CD4-positive, alpha-beta T cell (primary cell): ENCODE measurements at regions of chr6 and their contacts with region 1.

Region 1: GRCh38 chr6:30616811-30617564 is at the start of gene PPP1R10:
- DNase-seq: peak; percentile 93 to 100 (median 98)
- ATAC-seq: peak; percentile 70
- H3K4me3 ChIP-seq: peak within 1 kb of the TSS; percentile 76
- H3K4me3 Mint-ChIP-seq: peak within 1 kb of the TSS; percentile 100
- H3K27ac ChIP-seq: peak within 1 kb of the TSS; percentile 94 to 98
- H3K27ac Mint-ChIP-seq: peak within 1 kb of the TSS; percentile 99
- H3K4me1 ChIP-seq: peaks cover 34% of the 10 kb centered on the region
- H3K4me1 Mint-ChIP-seq: peaks cover 32% of the 10 kb centered on the region
- H3K27me3 ChIP-seq: no peaks in the 10 kb centered on the region
- H3K27me3 Mint-ChIP-seq: peaks cover 5% of the 10 kb centered on the region
- CTCF ChIP-seq: no peak
- total RNA-seq, gene PPP1R10: 92.2 to 95.3 TPM

Region 2: GRCh38 chr6:30357678-30358540 is 259.1 kb before region 1 on chr6:
- CTCF ChIA-PET with region 1: no interaction called
- POLR2A ChIA-PET with region 1: no interaction called
- intact Hi-C with region 1: no loop called
- DNase-seq: peak; percentile 19 to 82 (median 44)
- ATAC-seq: peak; percentile 94
- H3K4me3 ChIP-seq: peak overlapping the region; percentile 49
- H3K4me3 Mint-ChIP-seq: peak overlapping the region; percentile 63
- H3K27ac ChIP-seq: no peak overlapping the region
- H3K27ac Mint-ChIP-seq: no peak overlapping the region
- H3K4me1 ChIP-seq: peaks cover 7% of the 10 kb centered on the region
- H3K4me1 Mint-ChIP-seq: peaks cover 5% of the 10 kb centered on the region
- H3K27me3 ChIP-seq: peaks cover 25 to 58% of the 10 kb centered on the region in 2 experiments
- H3K27me3 Mint-ChIP-seq: peaks cover 66% of the 10 kb centered on the region
- CTCF ChIP-seq: peak; percentile 80

Region 3: DNA sequence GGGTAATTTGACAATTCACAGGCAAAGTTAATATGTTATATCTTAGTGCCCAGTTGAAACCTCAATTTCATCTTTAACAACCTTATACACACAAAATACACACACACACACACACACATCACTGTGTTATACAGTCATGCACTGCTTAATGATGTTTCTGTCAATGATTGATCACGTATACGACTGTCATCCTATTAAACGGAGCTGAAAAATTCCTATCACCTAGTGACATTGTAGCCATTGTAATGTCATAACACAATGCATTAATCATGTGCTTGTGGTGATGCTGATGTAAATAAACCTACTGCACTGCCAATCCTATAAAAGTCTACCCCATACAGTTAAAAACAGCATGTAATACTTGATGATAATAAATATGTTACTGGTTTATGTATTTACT is 192.4 kb before region 1 on chr6:
- CTCF ChIA-PET with region 1: no interaction called
- POLR2A ChIA-PET with region 1: no interaction called
- intact Hi-C with region 1: no loop called
- DNase-seq: no peak
- ATAC-seq: no peak
- H3K4me3 ChIP-seq: no peak overlapping the region
- H3K4me3 Mint-ChIP-seq: no peak overlapping the region
- H3K27ac ChIP-seq: no peak overlapping the region
- H3K27ac Mint-ChIP-seq: no peak overlapping the region
- H3K4me1 ChIP-seq: no peaks in the 10 kb centered on the region
- H3K4me1 Mint-ChIP-seq: no peaks in the 10 kb centered on the region
- H3K27me3 ChIP-seq: peaks cover 8 to 25% of the 10 kb centered on the region in 2 experiments
- H3K27me3 Mint-ChIP-seq: peaks cover 77% of the 10 kb centered on the region
- CTCF ChIP-seq: no peak

Region 4: GRCh38 chr6:30453508-30454116 is 163.4 kb before region 1 on chr6:
- CTCF ChIA-PET with region 1: interaction called, 14 read pairs
- POLR2A ChIA-PET with region 1: interaction called, 4 read pairs
- intact Hi-C with region 1: no loop called
- DNase-seq: peak; percentile 77 to 95 (median 86)
- ATAC-seq: peak; percentile 76
- H3K4me3 ChIP-seq: peak overlapping the region; percentile 22
- H3K4me3 Mint-ChIP-seq: peak overlapping the region; percentile 67
- H3K27ac ChIP-seq: no peak overlapping the region
- H3K27ac Mint-ChIP-seq: no peak overlapping the region
- H3K4me1 ChIP-seq: peaks cover 44% of the 10 kb centered on the region
- H3K4me1 Mint-ChIP-seq: peaks cover 49% of the 10 kb centered on the region
- H3K27me3 ChIP-seq: peaks cover 64 to 78% of the 10 kb centered on the region in 2 experiments
- H3K27me3 Mint-ChIP-seq: peaks cover 91% of the 10 kb centered on the region
- CTCF ChIP-seq: peak; percentile 56

Region 5: DNA sequence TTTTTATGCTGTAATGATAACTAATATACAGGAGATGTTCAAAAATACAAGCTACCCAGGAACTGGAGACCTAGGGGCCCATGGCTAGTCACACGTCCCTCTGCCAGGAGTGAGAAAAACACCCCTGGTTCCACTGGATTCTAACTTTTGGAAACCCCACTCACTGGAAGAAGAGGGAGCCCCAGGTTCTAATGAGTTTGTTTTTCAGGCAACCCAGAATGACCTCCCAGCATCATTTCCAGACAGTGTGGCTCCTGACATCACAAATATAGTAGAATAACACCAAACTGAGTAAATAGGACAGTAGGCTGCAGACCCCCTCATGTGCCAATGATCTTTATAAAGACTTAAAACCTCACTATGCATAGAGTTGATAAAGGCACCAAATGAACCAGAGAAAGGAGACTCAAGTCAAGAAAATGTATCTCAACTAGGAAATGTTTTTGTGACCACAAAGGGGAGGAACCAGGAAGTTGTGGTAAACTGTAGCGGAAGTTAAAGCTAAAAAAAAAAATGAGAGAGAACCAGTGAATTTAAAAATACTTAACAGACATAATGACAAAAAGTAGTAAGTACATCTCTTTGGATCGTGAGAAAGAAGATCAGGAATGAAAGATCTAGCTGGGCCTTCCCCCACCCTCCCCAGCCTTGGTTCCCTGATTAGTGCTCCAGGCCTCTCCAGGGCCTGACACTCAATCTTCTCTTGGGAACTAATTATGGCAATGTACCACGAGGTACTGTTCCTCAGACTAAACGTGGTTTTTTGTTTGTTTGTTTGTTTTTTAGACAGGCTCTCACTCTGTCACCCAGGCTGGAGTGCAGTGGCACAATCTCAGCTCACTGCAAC is 107.9 kb before region 1 on chr6:
- CTCF ChIA-PET with region 1: no interaction called
- POLR2A ChIA-PET with region 1: interaction called, 18 read pairs
- intact Hi-C with region 1: no loop called
- DNase-seq: peak in 3 of 14 experiments; percentile 84 to 88 (median 86)
- ATAC-seq: peak; percentile 85
- H3K4me3 ChIP-seq: peak overlapping the region; percentile 36
- H3K4me3 Mint-ChIP-seq: peak overlapping the region; percentile 72
- H3K27ac ChIP-seq: peak overlapping the region; percentile 47 to 65
- H3K27ac Mint-ChIP-seq: peak overlapping the region; percentile 79
- H3K4me1 ChIP-seq: peaks cover 75% of the 10 kb centered on the region
- H3K4me1 Mint-ChIP-seq: peaks cover 62% of the 10 kb centered on the region
- H3K27me3 ChIP-seq: no peaks in the 10 kb centered on the region
- H3K27me3 Mint-ChIP-seq: no peaks in the 10 kb centered on the region
- CTCF ChIP-seq: no peak

Region 6: GRCh38 chr6:30556066-30556905 is 60.7 kb before region 1 on chr6 and contains the start of gene GNL1:
- CTCF ChIA-PET with region 1: no interaction called
- POLR2A ChIA-PET with region 1: interaction called, 83 read pairs
- intact Hi-C with region 1: loop called (anchors 1 kb)
- DNase-seq: peak; percentile 98 to 100 (median 99)
- ATAC-seq: peak; percentile 88
- H3K4me3 ChIP-seq: peak within 1 kb of the TSS; percentile 86
- H3K4me3 Mint-ChIP-seq: peak within 1 kb of the TSS; percentile 98
- H3K27ac ChIP-seq: peak within 1 kb of the TSS; percentile 94 to 97
- H3K27ac Mint-ChIP-seq: peak within 1 kb of the TSS; percentile 97
- H3K4me1 ChIP-seq: peaks cover 27% of the 10 kb centered on the region
- H3K4me1 Mint-ChIP-seq: peaks cover 50% of the 10 kb centered on the region
- H3K27me3 ChIP-seq: no peaks in the 10 kb centered on the region
- H3K27me3 Mint-ChIP-seq: no peaks in the 10 kb centered on the region
- CTCF ChIP-seq: no peak
- total RNA-seq, gene GNL1: 145 to 151 TPM

Region 7: DNA sequence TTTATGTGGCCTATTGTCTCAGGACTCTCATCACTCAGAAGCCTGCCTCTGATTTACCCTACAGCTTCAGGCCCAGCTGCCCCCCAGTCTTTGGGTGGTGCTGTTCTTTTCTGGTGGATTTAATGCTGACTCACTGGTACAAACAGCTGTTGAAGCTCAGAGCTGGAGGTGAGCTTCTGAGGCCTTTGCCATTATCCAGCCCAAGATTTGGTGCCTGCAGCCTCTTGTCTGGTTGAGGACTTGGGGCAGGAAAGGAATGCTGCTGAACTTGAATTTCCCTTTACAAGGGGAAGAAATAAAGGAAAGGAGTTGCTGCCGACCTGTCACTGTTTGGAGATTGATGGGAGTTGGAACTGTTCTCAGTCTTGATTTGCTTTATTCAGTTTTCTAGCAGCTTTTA is 26.0 kb before region 1 on chr6:
- CTCF ChIA-PET with region 1: interaction called, 22 read pairs
- POLR2A ChIA-PET with region 1: interaction called, 135 read pairs
- intact Hi-C with region 1: no loop called
- DNase-seq: no peak
- ATAC-seq: no peak
- H3K4me3 ChIP-seq: no peak overlapping the region
- H3K4me3 Mint-ChIP-seq: no peak overlapping the region
- H3K27ac ChIP-seq: no peak overlapping the region
- H3K27ac Mint-ChIP-seq: no peak overlapping the region
- H3K4me1 ChIP-seq: no peaks in the 10 kb centered on the region
- H3K4me1 Mint-ChIP-seq: peaks cover 12% of the 10 kb centered on the region
- H3K27me3 ChIP-seq: no peaks in the 10 kb centered on the region
- H3K27me3 Mint-ChIP-seq: no peaks in the 10 kb centered on the region
- CTCF ChIP-seq: no peak

Region 8: DNA sequence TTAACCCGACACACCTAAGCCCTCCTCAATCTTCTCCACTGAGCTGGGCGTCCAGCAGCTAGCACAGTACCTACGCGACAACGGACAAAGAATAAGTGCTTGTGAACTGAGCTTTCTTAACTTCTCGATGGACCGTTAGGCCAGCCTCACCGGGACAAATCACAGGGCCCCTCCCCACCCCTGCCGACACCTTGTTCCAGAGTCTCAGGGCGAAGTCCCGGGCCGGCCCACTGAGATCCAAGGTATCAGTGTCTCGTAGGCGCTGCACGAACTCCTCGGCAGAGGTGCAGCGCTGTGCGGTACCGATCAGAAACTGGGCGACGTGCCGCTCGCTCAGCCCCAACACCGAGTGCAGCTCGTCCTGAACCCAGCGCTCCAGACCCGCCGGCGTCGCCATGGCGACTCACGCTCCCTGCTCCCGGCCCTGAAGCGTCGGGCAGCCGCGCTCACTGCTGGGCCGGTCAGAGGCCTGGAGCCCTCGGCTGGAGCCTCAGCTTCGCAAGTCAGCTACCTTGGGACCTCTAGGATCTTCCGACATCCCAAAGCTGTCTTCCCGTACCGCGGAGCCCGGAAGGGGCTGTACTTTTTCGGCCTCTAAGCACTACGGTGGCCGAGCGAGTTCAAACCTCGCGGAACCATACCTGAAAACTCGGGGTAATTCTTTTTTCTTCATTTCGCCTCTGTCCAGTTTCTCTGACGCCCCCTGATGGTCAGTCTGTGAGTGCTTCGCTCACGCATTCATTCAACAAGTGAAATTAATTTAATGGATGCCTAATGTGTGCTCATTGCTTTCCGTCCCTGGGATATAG is 55.7 kb after region 1 on chr6 and contains the start of gene DHX16:
- CTCF ChIA-PET with region 1: interaction called, 4 read pairs
- POLR2A ChIA-PET with region 1: interaction called, 17 read pairs
- intact Hi-C with region 1: loop called in 1 of 2 experiments (anchors 5 kb)
- DNase-seq: peak; percentile 79 to 95 (median 84)
- ATAC-seq: peak; percentile 76
- H3K4me3 ChIP-seq: peak within 1 kb of the TSS; percentile 98
- H3K4me3 Mint-ChIP-seq: peak within 1 kb of the TSS; percentile 87
- H3K27ac ChIP-seq: peak within 1 kb of the TSS; percentile 49 to 59
- H3K27ac Mint-ChIP-seq: peak within 1 kb of the TSS; percentile 86
- H3K4me1 ChIP-seq: peaks cover 18% of the 10 kb centered on the region
- H3K4me1 Mint-ChIP-seq: peaks cover 49% of the 10 kb centered on the region
- H3K27me3 ChIP-seq: no peaks in the 10 kb centered on the region
- H3K27me3 Mint-ChIP-seq: no peaks in the 10 kb centered on the region
- CTCF ChIP-seq: peak; percentile 69
- total RNA-seq, gene DHX16: 15.9 to 16.1 TPM

Region 9: GRCh38 chr6:30730601-30731435 is 113.8 kb after region 1 on chr6:
- CTCF ChIA-PET with region 1: interaction called, 13 read pairs
- POLR2A ChIA-PET with region 1: interaction called, 15 read pairs
- intact Hi-C with region 1: no loop called
- DNase-seq: peak; percentile 74 to 92 (median 84)
- ATAC-seq: peak; percentile 99
- H3K4me3 ChIP-seq: peak overlapping the region; percentile 25
- H3K4me3 Mint-ChIP-seq: peak overlapping the region; percentile 50
- H3K27ac ChIP-seq: peak overlapping the region in 1 of 2 donors; percentile 14
- H3K27ac Mint-ChIP-seq: peak overlapping the region; percentile 67
- H3K4me1 ChIP-seq: peaks cover 36% of the 10 kb centered on the region
- H3K4me1 Mint-ChIP-seq: peaks cover 46% of the 10 kb centered on the region
- H3K27me3 ChIP-seq: no peaks in the 10 kb centered on the region
- H3K27me3 Mint-ChIP-seq: no peaks in the 10 kb centered on the region
- CTCF ChIP-seq: peak; percentile 84